Activated B cell treated with CpG ODN at 0.5 μM for 24 hours (primary cell): ENCODE measurements at regions of chr22 and their contacts with region 1.

Region 1: DNA sequence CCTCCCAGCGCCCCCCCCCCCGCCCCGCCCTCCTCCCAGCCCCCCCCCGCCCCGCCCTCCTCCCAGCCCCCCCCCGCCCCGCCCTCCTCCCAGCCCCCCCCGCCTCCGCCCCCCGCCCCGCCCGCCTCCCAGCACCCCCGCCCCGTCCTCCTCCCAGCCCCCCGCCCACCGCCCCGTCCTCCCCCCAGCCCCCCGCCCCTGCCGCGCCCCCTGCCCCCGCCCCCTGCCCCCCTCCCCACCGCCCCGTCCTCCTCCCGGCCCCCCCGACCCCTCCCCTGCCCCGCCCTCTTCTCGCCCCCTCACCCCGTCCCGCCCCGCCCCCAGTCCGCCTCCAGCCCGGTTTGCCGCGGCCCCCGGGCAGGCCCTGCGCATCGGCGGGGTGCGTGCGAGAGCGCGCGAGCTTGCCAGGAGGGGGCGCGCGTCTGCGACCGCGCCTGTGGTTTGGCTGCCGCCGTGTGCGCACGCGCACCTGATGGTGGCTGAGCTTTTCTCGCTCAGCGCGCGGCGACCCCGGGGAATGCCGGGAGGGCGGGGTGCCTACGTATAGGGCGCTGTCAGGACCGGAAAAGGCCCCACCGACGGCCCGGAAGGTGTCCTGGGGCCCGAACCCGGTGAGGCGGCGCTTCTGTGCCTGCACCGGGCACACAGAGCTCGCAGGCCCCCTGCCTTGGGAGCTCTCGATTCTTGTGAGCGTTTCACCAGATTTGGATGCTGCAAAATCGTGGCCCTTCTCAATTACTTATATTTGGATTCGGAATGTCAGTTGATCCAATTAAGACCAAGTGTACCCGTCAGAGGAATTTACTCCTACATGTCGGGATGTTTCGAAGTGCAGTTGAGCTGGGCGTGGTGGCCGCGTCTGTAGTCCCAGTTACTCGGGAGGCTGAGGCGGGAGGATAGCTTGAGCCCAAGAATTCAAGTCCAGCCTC is 501 bp upstream of the TTLL12 start:
- DNase-seq: peak; percentile 97
- ATAC-seq: peak; percentile 88
- H3K4me3 Mint-ChIP-seq: peak overlapping the region; percentile 81
- H3K27ac Mint-ChIP-seq: peak overlapping the region; percentile 92
- H3K4me1 Mint-ChIP-seq: peaks cover 14% of the 10 kb centered on the region
- H3K27me3 Mint-ChIP-seq: peaks cover 3% of the 10 kb centered on the region
- CTCF ChIP-seq: no peak

Region 2: GRCh38 chr22:43142880-43143562 is 44.4 kb before region 1 on chr22 and contains the start of gene MCAT:
- CTCF ChIA-PET with region 1: no interaction called
- POLR2A ChIA-PET with region 1: interaction called, 21 read pairs
- intact Hi-C with region 1: loop called (anchors 1 kb)
- DNase-seq: peak; percentile 85
- ATAC-seq: peak; percentile 80
- H3K4me3 Mint-ChIP-seq: peak within 1 kb of the TSS; percentile 85
- H3K27ac Mint-ChIP-seq: peak within 1 kb of the TSS; percentile 90
- H3K4me1 Mint-ChIP-seq: peaks cover 37% of the 10 kb centered on the region
- H3K27me3 Mint-ChIP-seq: no peaks in the 10 kb centered on the region
- CTCF ChIP-seq: no peak
- total RNA-seq, gene MCAT: 12.7 and 13.2 TPM in 2 replicates

Region 3: DNA sequence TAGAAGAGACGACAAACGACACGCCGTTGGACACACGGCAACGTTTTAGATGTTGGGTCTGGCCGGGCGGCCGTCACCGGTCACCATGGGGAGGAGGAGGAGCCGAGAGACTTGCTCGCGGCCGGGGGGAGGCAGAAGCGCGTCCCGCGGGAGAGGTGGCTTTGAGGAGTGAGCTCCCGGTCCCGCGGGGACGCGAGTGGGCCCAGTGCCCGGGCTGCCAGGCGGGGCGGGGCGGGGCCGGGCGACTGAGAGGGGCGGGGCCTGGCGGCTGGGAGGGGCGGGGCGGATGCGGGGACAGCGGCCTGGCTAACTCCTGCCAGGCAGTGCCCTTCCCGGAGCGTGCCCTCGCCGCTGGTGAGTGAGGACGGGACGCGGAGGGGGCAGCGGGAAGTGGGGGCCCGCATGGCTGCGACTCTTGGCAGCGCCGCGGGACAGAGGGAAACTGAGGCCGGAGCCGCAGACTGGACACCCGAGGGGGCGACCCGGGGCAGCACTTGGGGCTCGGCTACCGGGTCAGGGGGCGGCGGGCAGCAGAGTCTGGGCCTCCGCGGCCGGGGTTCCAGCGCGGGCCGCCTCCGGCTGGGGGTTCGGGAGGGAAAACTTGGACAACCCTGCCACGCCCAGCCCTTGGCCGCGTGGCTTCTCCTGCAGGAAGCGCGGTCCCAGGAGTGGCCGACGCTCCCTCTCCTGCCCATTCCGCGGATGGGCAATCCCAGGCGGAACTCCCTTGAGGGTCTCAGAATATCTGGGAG is 36.0 kb before region 1 on chr22 and contains the start of gene TSPO:
- CTCF ChIA-PET with region 1: interaction called, 3 read pairs
- POLR2A ChIA-PET with region 1: interaction called, 21 read pairs
- intact Hi-C with region 1: loop called (anchors 1 kb)
- DNase-seq: peak; percentile 71
- ATAC-seq: peak; percentile 65
- H3K4me3 Mint-ChIP-seq: peak within 1 kb of the TSS; percentile 89
- H3K27ac Mint-ChIP-seq: peak within 1 kb of the TSS; percentile 82
- H3K4me1 Mint-ChIP-seq: peaks cover 53% of the 10 kb centered on the region
- H3K27me3 Mint-ChIP-seq: no peaks in the 10 kb centered on the region
- CTCF ChIP-seq: no peak
- total RNA-seq, gene TSPO: 40.9 and 48.2 TPM in 2 replicates